HEK293 (cell line): ENCODE measurements at regions of chr3 and their contacts with region 1.

Region 1: GRCh38 chr3:87350364-87351199 is 74.2 kb upstream of the POU1F1 start:
- H3K4me3 ChIP-seq: no peak overlapping the region
- H3K27ac ChIP-seq: no peak overlapping the region
- H3K4me1 ChIP-seq: no peaks in the 10 kb centered on the region
- CTCF ChIP-seq: no peak

Region 2: GRCh38 chr3:86923071-86923491 is 427.5 kb before region 1 on chr3:
- CTCF ChIA-PET with region 1: no interaction called
- POLR2A ChIA-PET with region 1: no interaction called
- H3K4me3 ChIP-seq: no peak overlapping the region
- H3K27ac ChIP-seq: no peak overlapping the region
- H3K4me1 ChIP-seq: no peaks in the 10 kb centered on the region
- CTCF ChIP-seq: no peak

Region 3: DNA sequence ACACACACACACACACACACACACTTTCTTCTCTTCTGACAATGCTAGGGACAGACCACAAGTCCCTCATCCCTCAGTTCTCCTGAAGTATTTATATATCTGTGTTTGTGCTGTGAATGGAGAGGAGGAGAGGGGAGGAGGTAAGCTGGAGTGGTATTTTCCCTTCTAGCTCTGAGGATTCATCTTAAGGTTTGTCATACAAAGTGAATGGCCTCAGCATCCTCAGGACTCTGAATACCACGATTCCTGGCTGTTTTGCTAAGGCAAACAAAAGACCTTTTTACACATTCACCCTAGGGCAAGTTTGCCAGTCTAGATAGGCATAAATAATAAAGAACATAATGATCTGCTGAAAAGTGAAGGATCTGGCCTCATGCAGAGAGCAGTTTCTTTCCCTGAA is 189.2 kb before region 1 on chr3:
- CTCF ChIA-PET with region 1: no interaction called
- POLR2A ChIA-PET with region 1: no interaction called
- H3K4me3 ChIP-seq: no peak overlapping the region
- H3K27ac ChIP-seq: no peak overlapping the region
- H3K4me1 ChIP-seq: no peaks in the 10 kb centered on the region
- CTCF ChIP-seq: no peak

Region 4: DNA sequence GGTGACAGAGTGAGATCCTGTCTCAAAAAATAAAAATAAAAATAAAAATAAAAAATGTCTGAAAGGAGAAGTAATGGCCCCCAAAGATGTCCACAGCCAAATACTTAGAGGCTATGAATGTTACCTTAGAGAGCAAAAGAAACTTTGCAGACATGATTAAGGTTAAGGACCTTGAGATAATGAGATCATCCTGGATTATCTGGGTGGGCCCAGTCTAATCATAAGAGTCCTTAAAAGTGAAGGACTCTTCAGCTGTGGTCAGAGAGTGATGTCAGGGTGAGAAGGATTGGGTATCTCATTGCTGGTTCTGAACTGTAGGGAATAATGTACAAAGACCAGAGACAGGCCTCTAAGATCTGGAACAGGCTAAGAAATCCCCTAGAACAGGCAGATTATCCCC is 10.7 kb after region 1 on chr3:
- CTCF ChIA-PET with region 1: interaction called, 13 read pairs
- POLR2A ChIA-PET with region 1: no interaction called
- H3K4me3 ChIP-seq: no peak overlapping the region
- H3K27ac ChIP-seq: no peak overlapping the region
- H3K4me1 ChIP-seq: no peaks in the 10 kb centered on the region
- CTCF ChIP-seq: no peak